RWPE1 (cell line): ENCODE measurements at regions of chr19 and their contacts with region 1.

Region 1: GRCh38 chr19:50431343-50432220 is 1.1 kb upstream of the MYBPC2 start:
- DNase-seq: peak; percentile 91
- H3K27ac ChIP-seq: no peak overlapping the region
- CTCF ChIP-seq: no peak

Region 2: DNA sequence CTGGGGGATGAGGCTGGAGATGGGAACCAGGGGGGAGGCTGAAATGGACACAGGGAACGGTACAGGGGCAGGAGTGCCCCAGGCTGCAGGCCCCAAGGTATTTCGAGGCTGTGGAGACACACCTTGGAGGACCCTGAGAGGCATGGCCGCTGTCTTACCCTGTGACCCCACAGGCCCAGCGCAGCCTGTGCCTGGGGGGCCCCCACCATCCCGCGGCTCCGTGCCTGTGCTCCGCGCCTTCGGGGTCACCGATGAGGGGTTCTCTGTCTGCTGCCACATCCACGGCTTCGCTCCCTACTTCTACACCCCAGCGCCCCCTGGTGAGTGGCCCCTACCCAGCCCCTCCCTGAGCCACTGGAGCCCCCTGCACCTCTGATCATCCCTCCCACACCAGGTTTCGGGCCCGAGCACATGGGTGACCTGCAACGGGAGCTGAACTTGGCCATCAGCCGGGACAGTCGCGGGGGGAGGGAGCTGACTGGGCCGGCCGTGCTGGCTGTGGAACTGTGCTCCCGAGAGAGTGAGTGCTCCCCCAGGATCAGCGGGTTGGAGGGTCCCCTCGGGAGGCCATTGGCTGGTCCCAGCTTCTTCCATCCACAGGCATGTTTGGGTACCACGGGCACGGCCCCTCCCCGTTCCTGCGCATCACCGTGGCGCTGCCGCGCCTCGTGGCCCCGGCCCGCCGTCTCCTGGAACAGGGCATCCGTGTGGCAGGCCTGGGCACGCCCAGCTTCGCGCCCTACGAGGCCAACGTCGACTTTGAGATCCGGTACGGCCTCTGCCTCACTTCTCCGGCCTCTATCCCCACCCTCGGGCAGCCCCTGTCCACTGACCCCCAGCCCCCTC is 29.8 kb before region 1 on chr19:
- CTCF ChIA-PET with region 1: interaction called, 12 read pairs
- POLR2A ChIA-PET with region 1: no interaction called
- DNase-seq: no peak
- H3K27ac ChIP-seq: no peak overlapping the region
- CTCF ChIP-seq: no peak